Esophagus squamous epithelium (tissue), 5 donors: ENCODE measurements at regions of chr7 and their contacts with region 1.

Region 1: DNA sequence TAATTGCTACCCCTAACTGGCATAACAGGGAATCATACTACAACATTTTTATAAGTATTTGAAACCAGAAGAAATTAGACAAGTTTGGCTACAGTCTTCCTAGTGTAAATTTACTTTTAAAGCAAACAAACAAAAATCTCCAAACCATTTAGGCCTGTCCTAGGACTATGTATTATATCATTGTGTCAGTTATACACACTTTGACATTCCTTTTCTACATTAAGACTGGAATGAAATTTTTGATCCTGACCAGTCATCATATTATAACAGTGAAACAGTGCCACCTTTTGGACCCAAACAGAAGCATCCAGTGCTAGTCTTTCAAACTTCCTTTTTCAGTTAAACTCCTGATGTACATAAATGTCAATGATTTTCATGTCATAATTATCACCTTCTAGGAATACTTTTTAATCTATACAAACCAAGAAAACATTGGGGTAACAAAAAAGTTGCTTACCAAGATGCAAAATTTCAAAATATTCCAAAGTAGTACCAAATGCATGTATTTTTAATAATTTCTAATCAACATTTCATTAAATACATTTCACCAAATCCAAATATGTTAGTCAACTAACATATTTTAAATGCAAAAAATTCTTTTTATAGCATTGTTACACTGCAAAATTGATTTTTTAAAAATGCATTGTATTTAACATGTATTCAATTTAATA is 75.7 kb downstream of the IMMP2L start:
- DNase-seq: no peak
- H3K4me3 ChIP-seq: no peak overlapping the region
- H3K27ac ChIP-seq: no peak overlapping the region
- H3K4me1 ChIP-seq: no peaks in the 10 kb centered on the region
- H3K27me3 ChIP-seq: no peaks in the 10 kb centered on the region
- CTCF ChIP-seq: peak in 5 of 6 experiments; percentile 54 to 73 (median 61)
- POLR2A ChIP-seq: no peak

Region 2: DNA sequence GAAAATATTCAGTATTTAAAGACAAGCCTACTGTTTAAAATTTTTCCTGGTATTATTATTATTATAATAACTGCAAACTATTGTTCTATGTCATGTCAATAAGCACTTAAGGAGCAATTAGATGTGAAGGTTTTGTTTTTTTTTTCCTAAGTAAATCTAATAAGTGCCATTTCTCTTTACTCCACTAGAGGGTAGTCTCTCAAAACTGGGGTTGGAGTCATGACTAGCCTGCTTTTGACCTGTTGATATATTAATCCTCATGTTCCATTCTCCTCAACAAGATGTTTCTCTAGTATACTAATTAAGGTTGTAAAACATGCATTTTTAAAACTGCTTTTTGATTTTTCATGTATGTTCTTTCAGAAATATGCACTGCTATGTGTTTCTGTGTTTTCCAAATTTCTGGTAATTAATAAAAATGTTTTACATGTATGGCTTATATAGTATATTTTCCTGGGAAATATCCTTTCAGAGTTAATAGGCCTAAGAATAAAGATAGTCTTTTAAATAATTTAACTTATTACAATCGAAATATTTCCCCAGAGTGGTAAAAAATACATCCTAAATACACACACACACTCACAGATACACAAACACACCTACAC is 396.7 kb before region 1 on chr7:
- intact Hi-C with region 1: loop called (anchors 5 kb)
- DNase-seq: no peak
- H3K4me3 ChIP-seq: no peak overlapping the region
- H3K27ac ChIP-seq: no peak overlapping the region
- H3K4me1 ChIP-seq: peaks cover 0 to 11% (median 0%) of the 10 kb centered on the region in 3 donors
- H3K27me3 ChIP-seq: no peaks in the 10 kb centered on the region
- CTCF ChIP-seq: peak in 5 of 6 experiments; percentile 53 to 76 (median 59)
- POLR2A ChIP-seq: no peak